ENCODE measurements at regions of chr7 and their contacts with region 1.

Region 1: GRCh38 chr7:112206238-112207044 is at the starts of genes DOCK4 and ZNF277:
- DNase-seq: peak; percentile 95 to 100
- H3K4me3 ChIP-seq: peak within 1 kb of the TSS; percentile 66
- H3K27ac ChIP-seq: no peak within 1 kb of the TSS
- H3K4me1 ChIP-seq: peaks cover 19% of the 10 kb centered on the region
- H3K27me3 ChIP-seq: no peaks in the 10 kb centered on the region
- CTCF ChIP-seq: no peak
- total RNA-seq, gene DOCK4: 0.98 and 1.7 TPM in 2 replicates
- total RNA-seq, gene ZNF277: 23.3 and 33.4 TPM in 2 replicates

Region 2: GRCh38 chr7:111763221-111763801 is 443.1 kb before region 1 on chr7:
- CTCF ChIA-PET with region 1: no interaction called
- POLR2A ChIA-PET with region 1: interaction called, 5 read pairs
- intact Hi-C with region 1: loop called (anchors 5 kb)
- DNase-seq: no peak
- H3K4me3 ChIP-seq: no peak overlapping the region
- H3K27ac ChIP-seq: no peak overlapping the region
- H3K4me1 ChIP-seq: no peaks in the 10 kb centered on the region
- H3K27me3 ChIP-seq: no peaks in the 10 kb centered on the region
- CTCF ChIP-seq: peak; percentile 88

Region 3: DNA sequence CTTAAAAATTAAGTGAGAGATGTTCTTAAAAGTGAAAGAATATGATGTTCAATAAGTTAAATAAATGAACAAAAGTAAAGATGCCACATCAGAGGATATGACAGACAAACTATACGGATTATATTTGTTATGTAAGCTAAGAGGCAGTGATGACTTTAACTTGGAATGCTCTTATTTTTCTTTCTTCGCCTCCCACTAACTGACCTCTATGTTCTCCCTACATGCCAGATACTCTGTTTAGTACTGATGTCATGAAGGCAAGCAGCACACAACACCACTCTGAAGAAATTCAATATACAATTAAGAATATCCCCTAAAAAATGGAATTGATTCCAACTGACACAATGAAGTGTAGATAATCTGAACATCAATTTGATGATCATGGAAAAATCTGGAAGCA is 223.6 kb before region 1 on chr7:
- CTCF ChIA-PET with region 1: no interaction called
- POLR2A ChIA-PET with region 1: no interaction called
- intact Hi-C with region 1: loop called (anchors 5 kb)
- DNase-seq: no peak
- H3K4me3 ChIP-seq: no peak overlapping the region
- H3K27ac ChIP-seq: no peak overlapping the region
- H3K4me1 ChIP-seq: peaks cover 27% of the 10 kb centered on the region
- H3K27me3 ChIP-seq: no peaks in the 10 kb centered on the region
- CTCF ChIP-seq: no peak

Region 4: DNA sequence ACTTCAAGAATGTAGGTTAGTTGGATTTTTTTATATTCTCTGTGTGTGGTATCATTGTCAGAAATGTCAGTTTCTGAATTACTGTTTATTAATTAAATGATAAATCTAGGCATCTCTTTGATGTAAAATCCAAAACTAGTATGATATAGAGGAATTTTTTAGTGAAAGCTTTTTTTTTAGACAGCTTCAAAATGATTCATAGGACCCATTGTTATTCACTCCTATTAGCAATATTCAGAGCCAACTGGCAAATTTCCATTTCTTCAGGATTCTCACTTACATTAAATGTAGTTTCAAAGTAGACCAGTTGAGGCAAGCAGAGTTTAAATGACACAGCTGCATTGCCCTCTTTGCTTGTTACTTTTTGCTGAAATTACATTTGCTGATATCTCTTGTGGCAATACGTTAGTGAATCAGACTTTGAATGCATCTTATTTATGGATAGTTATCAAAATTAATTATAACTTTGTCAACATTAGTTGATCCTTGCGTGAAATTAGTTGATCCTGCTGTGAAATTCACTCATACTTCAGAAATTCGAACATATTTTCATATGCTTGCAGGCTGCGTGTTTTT is 20.3 kb after region 1 on chr7:
- CTCF ChIA-PET with region 1: no interaction called
- POLR2A ChIA-PET with region 1: no interaction called
- intact Hi-C with region 1: no loop called
- DNase-seq: no peak
- H3K4me3 ChIP-seq: no peak overlapping the region
- H3K27ac ChIP-seq: no peak overlapping the region
- H3K4me1 ChIP-seq: no peaks in the 10 kb centered on the region
- H3K27me3 ChIP-seq: no peaks in the 10 kb centered on the region
- CTCF ChIP-seq: no peak

Region 5: GRCh38 chr7:112286250-112287086 is 80.0 kb after region 1 on chr7:
- CTCF ChIA-PET with region 1: interaction called, 12 read pairs
- POLR2A ChIA-PET with region 1: no interaction called
- intact Hi-C with region 1: no loop called
- DNase-seq: no peak
- H3K4me3 ChIP-seq: no peak overlapping the region
- H3K27ac ChIP-seq: no peak overlapping the region
- H3K4me1 ChIP-seq: no peaks in the 10 kb centered on the region
- H3K27me3 ChIP-seq: no peaks in the 10 kb centered on the region
- CTCF ChIP-seq: no peak

Region 6: DNA sequence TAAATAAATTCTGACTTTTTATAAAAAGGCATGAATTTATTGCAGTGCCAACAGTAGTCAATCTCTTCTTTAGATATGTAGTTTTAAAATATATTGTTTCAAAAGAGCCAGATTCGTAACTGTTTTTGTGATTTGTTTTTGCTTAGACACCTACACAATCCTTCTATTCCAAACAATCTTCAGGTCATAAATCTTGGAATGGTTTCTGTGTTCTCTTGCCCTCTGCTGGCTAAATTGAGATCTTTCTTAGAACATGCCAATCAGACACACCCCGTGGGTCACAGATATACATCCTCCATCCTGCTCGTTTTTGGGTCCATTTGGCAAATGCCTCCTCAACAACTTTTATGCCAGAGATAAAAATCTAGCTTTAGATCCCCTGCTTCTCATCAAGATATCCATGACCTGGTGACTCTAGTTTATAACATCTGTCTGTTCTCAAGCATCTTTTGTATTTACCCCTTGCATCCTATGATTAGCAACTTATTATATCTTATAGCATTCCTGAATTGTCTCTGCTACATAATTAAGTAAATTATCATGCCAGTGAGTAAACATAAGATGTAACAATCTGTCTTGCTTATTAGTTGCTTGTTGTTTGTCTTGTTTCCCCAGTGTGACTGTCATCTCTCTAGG is 208.5 kb after region 1 on chr7:
- CTCF ChIA-PET with region 1: no interaction called
- POLR2A ChIA-PET with region 1: no interaction called
- intact Hi-C with region 1: loop called (anchors 2 kb)
- DNase-seq: no peak
- H3K4me3 ChIP-seq: no peak overlapping the region
- H3K27ac ChIP-seq: no peak overlapping the region
- H3K4me1 ChIP-seq: no peaks in the 10 kb centered on the region
- H3K27me3 ChIP-seq: no peaks in the 10 kb centered on the region
- CTCF ChIP-seq: peak; percentile 72

Region 7: GRCh38 chr7:112481833-112482670 is 275.6 kb after region 1 on chr7:
- CTCF ChIA-PET with region 1: no interaction called
- POLR2A ChIA-PET with region 1: no interaction called
- intact Hi-C with region 1: loop called (anchors 2 kb)
- DNase-seq: peak; percentile 83 to 93
- H3K4me3 ChIP-seq: no peak overlapping the region
- H3K27ac ChIP-seq: peak overlapping the region; percentile 48
- H3K4me1 ChIP-seq: peaks cover 35% of the 10 kb centered on the region
- H3K27me3 ChIP-seq: no peaks in the 10 kb centered on the region
- CTCF ChIP-seq: no peak